Ascending aorta (tissue), 2 donors: ENCODE measurements at regions of chr17 and their contacts with region 1.

Region 1: GRCh38 chr17:2029911-2030778 is at the start of gene DPH1:
- DNase-seq: peak in 1 of 2 donors; percentile 90
- H3K4me3 ChIP-seq: peak within 1 kb of the TSS; percentile 95 to 99
- H3K27ac ChIP-seq: peak within 1 kb of the TSS in 1 of 2 donors; percentile 60
- H3K4me1 ChIP-seq: peaks cover 7 to 20% of the 10 kb centered on the region in 2 donors
- H3K27me3 ChIP-seq: no peaks in the 10 kb centered on the region
- CTCF ChIP-seq: no peak
- total RNA-seq, gene DPH1: 125 TPM

Region 2: GRCh38 chr17:1920948-1921351 is 109.2 kb before region 1 on chr17:
- intact Hi-C with region 1: no loop called
- DNase-seq: no peak
- H3K4me3 ChIP-seq: no peak overlapping the region
- H3K27ac ChIP-seq: no peak overlapping the region
- H3K4me1 ChIP-seq: no peaks in the 10 kb centered on the region
- H3K27me3 ChIP-seq: no peaks in the 10 kb centered on the region
- CTCF ChIP-seq: no peak

Region 3: GRCh38 chr17:1989135-1989534 is 41.0 kb before region 1 on chr17:
- intact Hi-C with region 1: loop called (anchors 5 kb)
- DNase-seq: peak in 1 of 2 donors; percentile 69
- H3K4me3 ChIP-seq: no peak overlapping the region
- H3K27ac ChIP-seq: no peak overlapping the region
- H3K4me1 ChIP-seq: peaks cover 0 to 4% of the 10 kb centered on the region in 2 donors
- H3K27me3 ChIP-seq: no peaks in the 10 kb centered on the region
- CTCF ChIP-seq: no peak